Natural killer cell (primary cell): ENCODE measurements at regions of chr1 and their contacts with region 1.

Region 1: DNA sequence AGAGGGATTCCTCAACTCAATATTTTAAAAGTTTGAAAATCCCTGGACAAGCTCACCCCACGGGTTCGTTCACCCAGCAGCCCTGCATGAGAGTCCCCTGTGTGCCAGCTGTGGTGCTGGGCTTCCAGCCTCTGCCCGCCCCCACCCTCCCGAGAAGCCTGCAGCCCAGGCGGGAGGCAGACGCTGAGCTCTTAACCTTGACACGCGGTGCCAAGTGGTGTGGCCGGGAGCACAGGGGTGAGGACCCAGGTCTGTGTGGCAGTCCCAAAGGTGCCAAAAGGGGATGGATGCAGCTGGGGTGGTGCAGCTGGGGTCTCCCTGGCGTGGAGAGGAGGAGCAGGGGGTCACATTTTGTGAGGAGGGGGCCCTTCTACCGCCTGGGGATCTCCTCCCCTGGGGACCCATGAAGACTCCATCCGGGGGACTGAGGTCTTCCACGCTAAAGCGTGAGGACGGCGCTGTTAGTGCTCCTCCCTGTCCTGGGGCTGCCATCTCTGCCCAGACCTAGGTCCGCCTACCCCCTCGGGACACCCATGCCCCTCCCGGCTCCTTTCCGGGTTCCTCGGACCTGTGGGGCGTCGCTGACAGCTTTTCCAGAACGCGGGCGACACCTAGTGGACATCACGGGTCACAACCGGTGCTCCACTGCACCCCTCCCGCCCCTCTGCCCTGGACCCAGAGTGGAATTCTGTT is 12.9 kb downstream of the PLA2G2F start:
- DNase-seq: peak; percentile 73 to 86
- ATAC-seq: peak; percentile 85 to 97 (median 97)
- H3K4me3 ChIP-seq: peak overlapping the region; percentile 21
- H3K4me3 Mint-ChIP-seq: peak overlapping the region; percentile 83
- H3K27ac ChIP-seq: no peak overlapping the region
- H3K27ac Mint-ChIP-seq: peak overlapping the region in 1 of 2 donors; percentile 83
- H3K4me1 ChIP-seq: peaks cover 29% of the 10 kb centered on the region
- H3K4me1 Mint-ChIP-seq: peaks cover 7 to 21% of the 10 kb centered on the region in 2 donors
- H3K27me3 ChIP-seq: no peaks in the 10 kb centered on the region
- H3K27me3 Mint-ChIP-seq: no peaks in the 10 kb centered on the region
- CTCF ChIP-seq: peak; percentile 89

Region 2: DNA sequence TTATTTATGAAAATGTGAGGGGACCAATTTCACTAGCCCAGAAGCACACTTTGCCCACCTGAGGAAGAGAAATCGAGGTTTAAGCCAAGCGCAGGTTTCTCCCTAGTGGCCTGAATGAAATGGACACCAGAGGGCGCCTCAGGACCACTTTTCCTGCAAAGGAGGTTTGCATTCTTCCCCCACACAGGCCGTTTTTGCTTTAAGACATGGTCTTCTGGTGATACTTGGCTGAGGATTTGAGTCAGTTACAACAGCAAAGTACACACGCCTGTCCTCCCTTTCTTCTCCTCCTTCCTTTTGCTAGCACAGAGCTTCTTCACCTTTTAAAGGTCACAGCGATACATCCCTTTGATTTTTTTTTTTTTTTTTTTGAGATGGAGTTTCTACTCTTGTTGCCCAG is 234.0 kb before region 1 on chr1:
- intact Hi-C with region 1: loop called (anchors 1 kb)
- DNase-seq: peak; percentile 68 to 89
- ATAC-seq: peak; percentile 54 to 79 (median 55)
- H3K4me3 ChIP-seq: no peak overlapping the region
- H3K4me3 Mint-ChIP-seq: no peak overlapping the region
- H3K27ac ChIP-seq: no peak overlapping the region
- H3K27ac Mint-ChIP-seq: no peak overlapping the region
- H3K4me1 ChIP-seq: no peaks in the 10 kb centered on the region
- H3K4me1 Mint-ChIP-seq: peaks cover 4 to 6% of the 10 kb centered on the region in 2 donors
- H3K27me3 ChIP-seq: no peaks in the 10 kb centered on the region
- H3K27me3 Mint-ChIP-seq: peaks cover 0 to 3% of the 10 kb centered on the region in 2 donors
- CTCF ChIP-seq: peak; percentile 77

Region 3: DNA sequence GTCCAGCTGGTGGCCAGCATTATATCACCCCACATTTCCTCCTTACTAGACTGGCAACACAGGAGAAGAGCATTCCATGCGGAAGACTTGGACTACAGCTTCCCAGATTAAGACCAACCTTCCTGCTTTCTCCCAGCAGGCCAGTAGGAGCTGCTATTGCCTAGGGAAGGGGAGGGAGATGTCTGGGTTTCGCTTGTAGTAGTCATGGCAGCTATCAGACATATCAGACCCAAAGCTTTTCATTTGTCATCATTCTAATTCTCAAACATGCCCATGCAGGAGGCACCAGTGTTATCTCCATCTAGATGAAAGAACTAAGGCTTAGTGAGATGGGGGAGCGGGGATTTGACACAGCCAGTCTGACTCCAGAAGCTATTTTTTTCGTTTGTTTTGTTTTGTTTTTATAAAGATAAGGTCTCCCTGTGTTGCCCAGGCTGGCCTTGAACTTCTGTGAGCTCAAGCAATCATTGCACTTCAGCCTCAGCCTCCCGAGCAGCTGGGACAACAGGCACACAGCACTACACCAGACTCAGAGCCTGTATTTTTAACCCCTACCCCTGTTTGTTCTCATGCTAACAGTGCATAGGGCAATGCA is 177.1 kb before region 1 on chr1:
- intact Hi-C with region 1: loop called (anchors 1 kb)
- DNase-seq: peak in 1 of 2 donors; percentile 57
- ATAC-seq: peak; percentile 49 to 75 (median 60)
- H3K4me3 ChIP-seq: no peak overlapping the region
- H3K4me3 Mint-ChIP-seq: no peak overlapping the region
- H3K27ac ChIP-seq: no peak overlapping the region
- H3K27ac Mint-ChIP-seq: no peak overlapping the region
- H3K4me1 ChIP-seq: no peaks in the 10 kb centered on the region
- H3K4me1 Mint-ChIP-seq: no peaks in the 10 kb centered on the region
- H3K27me3 ChIP-seq: no peaks in the 10 kb centered on the region
- H3K27me3 Mint-ChIP-seq: peaks cover 30 to 32% of the 10 kb centered on the region in 2 donors
- CTCF ChIP-seq: peak; percentile 71

Region 4: GRCh38 chr1:20233394-20233793 is 81.3 kb after region 1 on chr1:
- intact Hi-C with region 1: no loop called
- DNase-seq: peak in 1 of 2 donors; percentile 32
- ATAC-seq: no peak
- H3K4me3 ChIP-seq: no peak overlapping the region
- H3K4me3 Mint-ChIP-seq: no peak overlapping the region
- H3K27ac ChIP-seq: no peak overlapping the region
- H3K27ac Mint-ChIP-seq: no peak overlapping the region
- H3K4me1 ChIP-seq: no peaks in the 10 kb centered on the region
- H3K4me1 Mint-ChIP-seq: no peaks in the 10 kb centered on the region
- H3K27me3 ChIP-seq: peaks cover 10% of the 10 kb centered on the region
- H3K27me3 Mint-ChIP-seq: peaks cover 46 to 63% of the 10 kb centered on the region in 2 donors
- CTCF ChIP-seq: peak; percentile 12